ENCODE measurements at regions of chr12 and their contacts with region 1.

Region 1: GRCh38 chr12:53065975-53066931 is 12.9 kb downstream of the SPRYD3 start:
- DNase-seq: peak; percentile 78
- H3K4me3 Mint-ChIP-seq: no peak overlapping the region
- H3K27ac Mint-ChIP-seq: no peak overlapping the region
- H3K4me1 Mint-ChIP-seq: peaks cover 8% of the 10 kb centered on the region
- H3K27me3 Mint-ChIP-seq: no peaks in the 10 kb centered on the region

Region 2: GRCh38 chr12:53079226-53080117 is 13.2 kb after region 1 on chr12 and contains the start of gene SPRYD3:
- CTCF ChIA-PET with region 1: interaction called, 80 read pairs
- intact Hi-C with region 1: no loop called
- DNase-seq: peak; percentile 98
- H3K4me3 Mint-ChIP-seq: peak within 1 kb of the TSS; percentile 88
- H3K27ac Mint-ChIP-seq: peak within 1 kb of the TSS; percentile 85
- H3K4me1 Mint-ChIP-seq: peaks cover 31% of the 10 kb centered on the region
- H3K27me3 Mint-ChIP-seq: no peaks in the 10 kb centered on the region
- total RNA-seq, gene SPRYD3: 20.1 to 20.2 TPM

Region 3: GRCh38 chr12:53098982-53099651 is 32.9 kb after region 1 on chr12:
- CTCF ChIA-PET with region 1: interaction called, 360 read pairs
- intact Hi-C with region 1: loop called (anchors 1 kb)
- DNase-seq: peak; percentile 95
- H3K4me3 Mint-ChIP-seq: peak overlapping the region; percentile 44
- H3K27ac Mint-ChIP-seq: no peak overlapping the region
- H3K4me1 Mint-ChIP-seq: peaks cover 40% of the 10 kb centered on the region
- H3K27me3 Mint-ChIP-seq: peaks cover 6% of the 10 kb centered on the region

Region 4: GRCh38 chr12:53200458-53201176 is 134.4 kb after region 1 on chr12:
- CTCF ChIA-PET with region 1: interaction called, 26 read pairs
- intact Hi-C with region 1: loop called (anchors 5 kb)
- DNase-seq: peak; percentile 71
- H3K4me3 Mint-ChIP-seq: peak overlapping the region; percentile 45
- H3K27ac Mint-ChIP-seq: peak overlapping the region; percentile 90
- H3K4me1 Mint-ChIP-seq: peaks cover 74% of the 10 kb centered on the region
- H3K27me3 Mint-ChIP-seq: no peaks in the 10 kb centered on the region

Region 5: GRCh38 chr12:53508534-53509199 is 442.4 kb after region 1 on chr12:
- CTCF ChIA-PET with region 1: no interaction called
- intact Hi-C with region 1: no loop called
- DNase-seq: peak; percentile 93
- H3K4me3 Mint-ChIP-seq: no peak overlapping the region
- H3K27ac Mint-ChIP-seq: peak overlapping the region; percentile 10
- H3K4me1 Mint-ChIP-seq: peaks cover 11% of the 10 kb centered on the region
- H3K27me3 Mint-ChIP-seq: no peaks in the 10 kb centered on the region